ENCODE measurements at regions of chr11 and their contacts with region 1.

Region 1: GRCh38 chr11:57311109-57311936 is 13.4 kb downstream of the TNKS1BP1 start:
- DNase-seq: peak; percentile 90
- H3K4me3 Mint-ChIP-seq: peak overlapping the region; percentile 68
- H3K27ac Mint-ChIP-seq: no peak overlapping the region
- H3K4me1 Mint-ChIP-seq: peaks cover 14% of the 10 kb centered on the region
- H3K27me3 Mint-ChIP-seq: no peaks in the 10 kb centered on the region

Region 2: GRCh38 chr11:57133366-57134038 is 177.8 kb before region 1 on chr11:
- intact Hi-C with region 1: no loop called
- DNase-seq: no peak
- H3K4me3 Mint-ChIP-seq: no peak overlapping the region
- H3K27ac Mint-ChIP-seq: no peak overlapping the region
- H3K4me1 Mint-ChIP-seq: no peaks in the 10 kb centered on the region
- H3K27me3 Mint-ChIP-seq: no peaks in the 10 kb centered on the region

Region 3: GRCh38 chr11:57324886-57325734 is 13.8 kb after region 1 on chr11 and contains the start of gene TNKS1BP1:
- intact Hi-C with region 1: loop called (anchors 1 kb)
- DNase-seq: peak; percentile 96
- H3K4me3 Mint-ChIP-seq: peak within 1 kb of the TSS; percentile 83
- H3K27ac Mint-ChIP-seq: peak within 1 kb of the TSS; percentile 93
- H3K4me1 Mint-ChIP-seq: peaks cover 45% of the 10 kb centered on the region
- H3K27me3 Mint-ChIP-seq: no peaks in the 10 kb centered on the region
- total RNA-seq, gene TNKS1BP1: 23.7 and 24.2 TPM in 2 replicates